Right ventricle myocardium superior (tissue), 1 donor: ENCODE measurements at regions of chr2 and their contacts with region 1.

Region 1: GRCh38 chr2:98835831-98836385 is 100.1 kb downstream of the CRACDL start:
- DNase-seq: no peak
- ATAC-seq: no peak

Region 2: GRCh38 chr2:98649135-98649991 is 186.5 kb before region 1 on chr2:
- intact Hi-C with region 1: loop called (anchors 2 kb)
- DNase-seq: peak; percentile 69
- ATAC-seq: peak; percentile 98

Region 3: GRCh38 chr2:99085421-99085820 is 249.5 kb after region 1 on chr2:
- intact Hi-C with region 1: no loop called
- DNase-seq: no peak
- ATAC-seq: no peak